ENCODE measurements at regions of chr5 and their contacts with region 1.

Region 1: GRCh38 chr5:88680253-88681132 is 202.5 kb downstream of the MEF2C start:
- DNase-seq: no peak
- ATAC-seq: peak; percentile 90
- H3K4me3 ChIP-seq: peak overlapping the region; percentile 72
- H3K27ac ChIP-seq: no peak overlapping the region
- H3K4me1 ChIP-seq: no peaks in the 10 kb centered on the region
- H3K27me3 ChIP-seq: peaks cover 18 to 32% of the 10 kb centered on the region in 2 experiments
- CTCF ChIP-seq: peak; percentile 85 to 95 (median 93)
- EP300 ChIP-seq: no peak
- POLR2A ChIP-seq: no peak
- RAD21 ChIP-seq: peak; percentile 88

Region 2: DNA sequence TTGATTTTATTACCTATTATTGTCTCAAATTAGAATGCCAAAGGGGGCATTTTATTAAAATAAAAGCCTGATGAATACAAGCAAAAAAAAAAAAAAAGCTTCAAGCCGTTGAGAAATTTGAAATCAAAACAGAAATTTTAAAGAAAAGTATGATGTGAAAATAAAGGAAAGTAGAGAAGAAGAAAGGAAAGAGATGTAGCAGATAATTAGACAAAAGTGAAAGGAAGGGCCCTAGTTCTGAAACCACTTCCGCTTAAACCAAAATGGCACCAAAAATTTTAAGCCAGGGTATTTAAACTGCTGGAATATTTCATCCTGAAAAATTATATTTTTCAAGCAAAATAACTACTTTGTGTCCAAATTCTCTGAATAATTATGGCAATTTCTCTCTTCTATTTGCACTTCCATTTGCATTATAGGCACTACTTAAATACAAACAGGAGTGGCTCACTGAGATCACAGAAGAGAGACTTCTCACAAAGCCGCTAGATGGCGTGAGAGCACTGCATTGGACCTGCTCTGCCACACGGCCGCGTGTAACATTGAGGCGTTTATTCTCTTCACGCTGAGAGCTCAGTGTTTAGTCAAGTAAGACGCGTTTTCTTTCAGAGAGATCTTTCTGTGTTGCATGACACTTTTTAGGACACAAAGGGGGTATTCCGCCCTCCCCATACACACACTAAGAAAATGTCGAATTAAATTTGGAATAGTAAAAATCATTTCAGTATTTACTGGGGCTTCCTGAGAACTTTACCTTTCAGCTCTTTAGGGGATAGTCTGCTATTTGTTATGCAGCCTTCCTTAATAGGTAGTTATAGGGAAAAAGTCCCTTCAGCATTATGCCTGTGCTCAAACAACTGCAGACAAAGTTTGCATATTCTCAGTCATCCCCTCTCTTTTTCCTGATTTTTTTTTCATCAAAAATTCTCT is 899.4 kb before region 1 on chr5:
- CTCF ChIA-PET with region 1: interaction called, 33 read pairs
- POLR2A ChIA-PET with region 1: interaction called, 3 read pairs
- RAD21 ChIA-PET with region 1: interaction called, 13 read pairs
- SMC1A ChIA-PET with region 1: interaction called, 6 read pairs
- in situ Hi-C with region 1: loop called (anchors 5 kb)
- intact Hi-C with region 1: loop called (anchors 1 kb)
- DNase-seq: peak; percentile 48
- ATAC-seq: peak; percentile 100
- H3K4me3 ChIP-seq: no peak overlapping the region
- H3K27ac ChIP-seq: no peak overlapping the region
- H3K4me1 ChIP-seq: no peaks in the 10 kb centered on the region
- H3K27me3 ChIP-seq: no peaks in the 10 kb centered on the region
- CTCF ChIP-seq: peak; percentile 89 to 95 (median 91); a peak in 5 of 6 replicates
- EP300 ChIP-seq: no peak
- POLR2A ChIP-seq: no peak
- RAD21 ChIP-seq: peak; percentile 95

Region 3: DNA sequence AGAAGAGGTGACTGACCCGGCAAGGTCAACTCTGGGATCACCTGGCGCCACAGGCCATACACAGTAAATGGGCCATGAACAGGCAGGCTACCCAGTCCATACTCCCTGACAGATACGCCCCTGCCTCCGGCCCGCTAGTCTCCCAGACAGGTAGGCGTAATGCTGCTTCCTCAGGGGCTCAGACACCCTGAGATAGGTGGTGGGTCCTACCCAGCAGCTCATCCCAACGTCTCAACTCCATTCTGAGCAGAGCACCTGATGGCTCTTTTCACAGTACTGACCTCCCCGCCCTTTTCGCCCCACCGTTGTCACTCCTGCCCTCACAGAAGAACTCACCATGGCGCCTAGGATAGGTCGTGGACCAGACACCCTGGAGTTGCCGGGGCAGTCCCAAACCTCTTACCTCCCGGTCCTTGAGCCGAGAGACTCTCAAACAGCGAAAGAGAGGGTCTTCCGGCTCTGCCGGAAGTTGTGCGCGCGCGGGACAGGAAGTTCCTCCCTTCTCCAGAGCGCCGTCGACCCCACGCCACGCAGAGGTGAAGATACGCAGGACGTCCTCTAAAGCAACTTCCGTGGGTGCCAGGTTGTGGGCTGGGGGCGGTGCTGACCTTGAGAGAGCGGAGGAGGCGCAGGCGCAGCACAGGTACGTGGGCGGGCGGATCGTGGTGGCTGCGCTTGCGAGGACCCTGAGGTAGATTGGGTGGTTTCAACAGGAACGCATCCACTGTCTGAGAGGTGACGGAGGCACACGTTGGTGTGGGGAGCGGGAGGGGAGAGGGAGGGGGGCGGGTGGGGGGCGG is 411.9 kb before region 1 on chr5 and contains the start of gene TMEM161B:
- CTCF ChIA-PET with region 1: interaction called, 3 read pairs
- POLR2A ChIA-PET with region 1: no interaction called
- RAD21 ChIA-PET with region 1: no interaction called
- SMC1A ChIA-PET with region 1: interaction called, 4 read pairs
- in situ Hi-C with region 1: loop called (anchors 10 kb)
- intact Hi-C with region 1: loop called (anchors 5 kb)
- DNase-seq: peak; percentile 89
- ATAC-seq: peak; percentile 96
- H3K4me3 ChIP-seq: peak within 1 kb of the TSS; percentile 96
- H3K27ac ChIP-seq: peak within 1 kb of the TSS; percentile 91
- H3K4me1 ChIP-seq: peaks cover 3% of the 10 kb centered on the region; the same call in 1 of the 2 replicates
- H3K27me3 ChIP-seq: no peaks in the 10 kb centered on the region
- CTCF ChIP-seq: no peak
- EP300 ChIP-seq: no peak
- POLR2A ChIP-seq: peak; percentile 92
- RAD21 ChIP-seq: no peak
- polyA plus RNA-seq, gene TMEM161B: 23.0 to 30.0 TPM

Region 4: GRCh38 chr5:88613050-88613449 is 67.4 kb before region 1 on chr5:
- CTCF ChIA-PET with region 1: no interaction called
- POLR2A ChIA-PET with region 1: no interaction called
- RAD21 ChIA-PET with region 1: no interaction called
- SMC1A ChIA-PET with region 1: no interaction called
- in situ Hi-C with region 1: no loop called
- intact Hi-C with region 1: no loop called
- DNase-seq: no peak
- ATAC-seq: no peak
- H3K4me3 ChIP-seq: no peak overlapping the region
- H3K27ac ChIP-seq: no peak overlapping the region
- H3K4me1 ChIP-seq: no peaks in the 10 kb centered on the region
- H3K27me3 ChIP-seq: no peaks in the 10 kb centered on the region
- CTCF ChIP-seq: no peak
- EP300 ChIP-seq: no peak
- POLR2A ChIP-seq: no peak
- RAD21 ChIP-seq: no peak

Region 5: GRCh38 chr5:88634014-88634413 is 46.5 kb before region 1 on chr5:
- CTCF ChIA-PET with region 1: no interaction called
- POLR2A ChIA-PET with region 1: no interaction called
- RAD21 ChIA-PET with region 1: no interaction called
- SMC1A ChIA-PET with region 1: no interaction called
- in situ Hi-C with region 1: no loop called
- intact Hi-C with region 1: no loop called
- DNase-seq: no peak
- ATAC-seq: no peak
- H3K4me3 ChIP-seq: no peak overlapping the region
- H3K27ac ChIP-seq: no peak overlapping the region
- H3K4me1 ChIP-seq: no peaks in the 10 kb centered on the region
- H3K27me3 ChIP-seq: peaks cover 0 to 4% of the 10 kb centered on the region in 2 experiments; a peak in 2 of 4 replicates
- CTCF ChIP-seq: no peak
- EP300 ChIP-seq: no peak
- POLR2A ChIP-seq: no peak
- RAD21 ChIP-seq: no peak

Region 6: DNA sequence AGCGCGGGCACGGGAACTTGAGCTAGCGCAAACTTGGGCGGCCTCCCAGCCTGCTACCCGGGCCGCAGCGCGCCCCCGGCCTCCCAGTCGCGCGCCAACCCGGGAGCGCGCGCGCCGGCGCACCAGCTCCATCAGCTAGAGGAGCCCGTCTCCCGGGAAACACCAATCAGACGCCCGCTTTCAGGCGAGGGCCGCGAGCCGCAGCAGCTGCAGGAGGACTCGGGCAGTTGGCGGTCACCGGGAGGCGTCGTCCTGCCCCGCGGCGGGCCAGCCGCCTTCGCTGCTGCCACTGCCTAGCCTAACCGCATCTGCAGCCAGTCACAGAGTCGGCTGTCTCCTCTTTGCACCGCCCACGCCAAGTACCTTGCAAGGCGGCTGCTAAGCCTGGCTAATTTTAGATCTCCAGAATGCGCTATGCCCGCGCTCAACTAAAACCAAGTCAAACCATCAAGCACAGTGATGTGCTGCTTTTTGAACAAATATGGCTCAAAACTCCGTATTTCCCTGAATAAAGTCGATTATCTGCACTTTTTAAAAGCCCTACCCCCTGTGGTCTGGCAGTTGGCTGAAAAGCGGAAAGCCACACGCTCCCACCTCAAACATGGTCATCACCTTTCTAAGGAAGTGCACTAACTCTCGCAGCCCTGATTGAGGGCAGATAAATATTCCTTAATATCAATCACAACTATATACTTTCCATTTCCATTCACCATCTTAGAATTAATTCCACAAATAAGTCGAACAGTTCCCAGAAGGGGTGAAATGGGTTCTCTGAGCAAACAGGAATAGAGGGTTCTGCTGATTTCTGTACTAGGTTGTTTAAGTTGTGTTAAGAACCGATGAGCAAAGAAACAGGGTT is 19.3 kb before region 1 on chr5:
- CTCF ChIA-PET with region 1: interaction called, 11 read pairs
- POLR2A ChIA-PET with region 1: no interaction called
- RAD21 ChIA-PET with region 1: interaction called, 5 read pairs
- SMC1A ChIA-PET with region 1: interaction called, 6 read pairs
- in situ Hi-C with region 1: no loop called
- intact Hi-C with region 1: no loop called
- DNase-seq: no peak
- ATAC-seq: peak; percentile 82
- H3K4me3 ChIP-seq: peak overlapping the region; percentile 43; the same call in 1 of the 2 replicates
- H3K27ac ChIP-seq: no peak overlapping the region
- H3K4me1 ChIP-seq: peaks cover 20% of the 10 kb centered on the region
- H3K27me3 ChIP-seq: peaks cover 0 to 30% of the 10 kb centered on the region in 2 experiments; a peak in 2 of 4 replicates
- CTCF ChIP-seq: no peak
- EP300 ChIP-seq: no peak
- POLR2A ChIP-seq: no peak
- RAD21 ChIP-seq: no peak

Region 7: GRCh38 chr5:88940713-88941112 is 260.2 kb after region 1 on chr5:
- CTCF ChIA-PET with region 1: no interaction called
- POLR2A ChIA-PET with region 1: no interaction called
- RAD21 ChIA-PET with region 1: no interaction called
- SMC1A ChIA-PET with region 1: no interaction called
- in situ Hi-C with region 1: no loop called
- intact Hi-C with region 1: no loop called
- DNase-seq: peak; percentile 13
- ATAC-seq: peak; percentile 96
- H3K4me3 ChIP-seq: no peak overlapping the region
- H3K27ac ChIP-seq: no peak overlapping the region
- H3K4me1 ChIP-seq: no peaks in the 10 kb centered on the region
- H3K27me3 ChIP-seq: no peaks in the 10 kb centered on the region
- CTCF ChIP-seq: no peak
- EP300 ChIP-seq: no peak
- POLR2A ChIP-seq: no peak
- RAD21 ChIP-seq: no peak